ENCODE measurements at regions of chr1 and their contacts with region 1.

Region 1: GRCh38 chr1:53246261-53247134 is 8.2 kb upstream of the MAGOH start:
- DNase-seq: no peak
- ATAC-seq: peak; percentile 50
- H3K4me3 Mint-ChIP-seq: no peak overlapping the region
- H3K27ac Mint-ChIP-seq: no peak overlapping the region
- H3K4me1 Mint-ChIP-seq: peaks cover 30% of the 10 kb centered on the region
- H3K27me3 Mint-ChIP-seq: no peaks in the 10 kb centered on the region
- CTCF ChIP-seq: no peak

Region 2: DNA sequence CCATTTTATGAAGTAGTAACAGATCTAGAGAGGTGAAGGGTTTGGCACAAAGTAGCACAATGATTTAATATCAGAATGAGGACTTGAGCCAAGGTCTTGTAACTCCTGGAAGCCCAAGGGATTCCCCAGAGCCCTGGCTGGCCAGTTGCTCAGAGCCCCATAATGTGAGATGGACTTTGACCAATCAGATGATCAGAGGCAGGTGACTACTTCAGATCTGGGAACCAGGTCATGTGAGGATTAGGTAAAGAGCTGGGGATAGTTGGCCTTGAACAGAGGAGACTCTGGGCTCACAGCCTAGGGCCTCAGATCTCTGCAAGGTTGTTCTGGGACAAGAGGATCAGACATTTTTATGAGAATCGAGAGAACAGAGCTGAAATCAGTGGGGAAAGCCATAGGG is 594.6 kb before region 1 on chr1:
- CTCF ChIA-PET with region 1: no interaction called
- POLR2A ChIA-PET with region 1: interaction called, 13 read pairs
- intact Hi-C with region 1: no loop called
- DNase-seq: no peak
- ATAC-seq: no peak
- H3K4me3 Mint-ChIP-seq: no peak overlapping the region
- H3K27ac Mint-ChIP-seq: peak overlapping the region; percentile 71
- H3K4me1 Mint-ChIP-seq: peaks cover 25% of the 10 kb centered on the region
- H3K27me3 Mint-ChIP-seq: no peaks in the 10 kb centered on the region
- CTCF ChIP-seq: no peak

Region 3: GRCh38 chr1:52913537-52913936 is 333.0 kb before region 1 on chr1:
- CTCF ChIA-PET with region 1: no interaction called
- POLR2A ChIA-PET with region 1: no interaction called
- intact Hi-C with region 1: no loop called
- DNase-seq: no peak
- ATAC-seq: no peak
- H3K4me3 Mint-ChIP-seq: no peak overlapping the region
- H3K27ac Mint-ChIP-seq: no peak overlapping the region
- H3K4me1 Mint-ChIP-seq: no peaks in the 10 kb centered on the region
- H3K27me3 Mint-ChIP-seq: no peaks in the 10 kb centered on the region
- CTCF ChIP-seq: no peak

Region 4: DNA sequence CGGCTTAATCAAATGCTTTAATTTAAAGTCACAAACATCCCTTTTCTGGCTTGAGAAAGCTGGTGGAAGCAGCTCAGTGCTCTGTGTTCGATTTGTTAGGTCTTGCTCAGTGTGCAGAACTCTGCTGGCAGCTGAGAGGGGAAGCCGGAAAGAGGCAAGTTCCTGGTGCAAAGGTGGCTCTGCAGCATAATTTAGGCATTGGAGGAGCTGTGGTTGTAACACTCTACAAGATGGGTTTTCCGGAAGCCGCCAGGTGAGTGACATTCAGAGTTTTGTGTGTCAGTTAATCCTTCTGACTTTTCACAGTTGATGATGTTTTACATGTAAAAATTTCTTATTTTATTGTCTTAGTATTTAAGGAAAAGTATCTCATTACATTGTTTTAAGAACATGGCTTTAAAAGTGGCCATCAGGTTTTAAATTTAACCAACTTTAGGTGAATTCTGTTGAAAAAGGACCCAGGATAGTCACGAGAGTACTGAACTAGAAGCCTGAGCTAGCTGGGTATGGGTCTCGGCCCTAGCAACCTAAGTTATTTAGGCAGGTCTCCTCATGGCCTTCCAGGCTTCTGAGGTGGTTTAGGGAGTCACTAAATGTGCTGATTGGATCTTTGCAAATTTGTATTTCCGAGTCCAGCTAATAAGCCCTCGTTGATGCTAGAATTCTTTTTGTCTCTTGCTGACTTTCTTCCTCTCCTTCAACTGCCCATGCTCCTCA is 231.5 kb before region 1 on chr1:
- CTCF ChIA-PET with region 1: no interaction called
- POLR2A ChIA-PET with region 1: no interaction called
- intact Hi-C with region 1: no loop called
- DNase-seq: peak; percentile 37
- ATAC-seq: peak; percentile 94
- H3K4me3 Mint-ChIP-seq: peak overlapping the region; percentile 92
- H3K27ac Mint-ChIP-seq: peak overlapping the region; percentile 72
- H3K4me1 Mint-ChIP-seq: peaks cover 36% of the 10 kb centered on the region
- H3K27me3 Mint-ChIP-seq: no peaks in the 10 kb centered on the region
- CTCF ChIP-seq: no peak

Region 5: DNA sequence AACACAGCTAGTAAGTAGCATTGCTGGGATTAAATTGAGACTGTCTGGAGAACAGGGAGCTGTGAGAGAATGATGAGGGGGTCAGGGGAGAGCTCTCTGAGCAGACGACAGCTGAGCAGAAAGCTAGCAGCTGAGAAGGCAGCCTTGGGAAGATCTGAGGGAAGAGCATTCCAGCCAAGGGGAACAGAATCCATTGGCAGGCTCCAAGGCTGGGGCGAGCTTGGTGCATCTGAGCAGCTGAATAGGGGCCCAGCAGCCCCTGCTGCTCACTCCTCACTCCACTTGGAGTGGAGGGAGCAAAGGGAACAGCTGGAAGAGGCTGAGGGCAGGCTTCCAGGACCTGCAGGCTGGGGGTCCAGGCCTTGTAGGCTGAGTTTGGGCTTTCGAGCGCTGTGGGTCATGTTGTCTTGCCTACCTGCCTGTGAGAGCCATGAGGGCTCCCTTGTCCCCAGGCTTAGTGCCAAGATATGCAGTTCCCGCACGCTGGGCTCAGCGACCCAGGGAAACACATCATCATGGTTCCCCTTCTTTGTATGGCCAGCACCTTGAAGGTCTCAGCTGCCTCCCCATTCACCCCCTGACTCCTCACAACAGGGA is 1312.0 kb after region 1 on chr1:
- CTCF ChIA-PET with region 1: no interaction called
- POLR2A ChIA-PET with region 1: no interaction called
- intact Hi-C with region 1: no loop called
- DNase-seq: no peak
- ATAC-seq: no peak
- H3K4me3 Mint-ChIP-seq: no peak overlapping the region
- H3K27ac Mint-ChIP-seq: no peak overlapping the region
- H3K4me1 Mint-ChIP-seq: no peaks in the 10 kb centered on the region
- H3K27me3 Mint-ChIP-seq: peaks cover 11% of the 10 kb centered on the region
- CTCF ChIP-seq: no peak